ENCODE measurements at regions of chr9 and their contacts with region 1.

Region 1: GRCh38 chr9:83544002-83544698 is 5.9 kb upstream of the FRMD3 start:
- DNase-seq: no peak
- ATAC-seq: peak; percentile 96
- H3K4me3 Mint-ChIP-seq: no peak overlapping the region
- H3K27ac Mint-ChIP-seq: no peak overlapping the region
- H3K4me1 Mint-ChIP-seq: 0 out of 2 replicates have a peak, but pooled peaks cover under 1% of the 10 kb centered on the region
- H3K27me3 Mint-ChIP-seq: peaks cover 25% of the 10 kb centered on the region
- CTCF ChIP-seq: peak; percentile 70

Region 2: DNA sequence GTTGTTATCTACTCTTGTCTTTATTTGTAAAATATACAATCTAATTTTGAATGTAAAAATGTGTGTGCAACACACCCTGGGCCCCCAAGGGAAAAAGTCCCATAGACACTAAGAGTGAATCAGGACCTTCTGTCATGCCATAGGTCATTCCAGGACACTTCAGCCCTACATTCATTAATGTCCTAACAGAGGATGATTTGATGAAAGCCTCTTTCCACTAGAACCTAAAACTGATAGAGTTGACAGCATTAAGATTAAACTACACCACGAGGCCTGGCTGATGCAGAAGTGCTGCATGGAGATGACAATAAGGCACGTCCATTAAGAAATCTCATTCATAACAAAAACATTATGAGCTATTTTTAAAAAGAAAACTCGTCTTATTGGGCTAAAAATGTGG is 52.2 kb before region 1 on chr9:
- CTCF ChIA-PET with region 1: no interaction called
- POLR2A ChIA-PET with region 1: no interaction called
- DNase-seq: no peak
- ATAC-seq: no peak
- H3K4me3 Mint-ChIP-seq: no peak overlapping the region
- H3K27ac Mint-ChIP-seq: no peak overlapping the region; the same call in 1 of the 2 replicates
- H3K4me1 Mint-ChIP-seq: peaks cover 4% of the 10 kb centered on the region
- H3K27me3 Mint-ChIP-seq: no peaks in the 10 kb centered on the region
- CTCF ChIP-seq: no peak

Region 3: GRCh38 chr9:83526901-83527300 is 17.2 kb before region 1 on chr9:
- CTCF ChIA-PET with region 1: interaction called, 12 read pairs
- POLR2A ChIA-PET with region 1: no interaction called
- DNase-seq: no peak
- ATAC-seq: peak; percentile 82
- H3K4me3 Mint-ChIP-seq: peak overlapping the region; percentile 15; the same call in 1 of the 2 replicates
- H3K27ac Mint-ChIP-seq: no peak overlapping the region
- H3K4me1 Mint-ChIP-seq: peaks cover 25% of the 10 kb centered on the region
- H3K27me3 Mint-ChIP-seq: no peaks in the 10 kb centered on the region
- CTCF ChIP-seq: no peak

Measured in WTC11 (cell line).